Transverse colon (tissue), 4 donors: ENCODE measurements at regions of chr1 and their contacts with region 1.

Region 1: GRCh38 chr1:171644805-171645483 is 7.5 kb downstream of the MYOC start:
- DNase-seq: peak; percentile 86
- H3K4me3 ChIP-seq: no peak overlapping the region
- H3K27ac ChIP-seq: peak overlapping the region; percentile 46 to 81 (median 66)
- H3K4me1 ChIP-seq: peaks cover 5 to 16% (median 10%) of the 10 kb centered on the region in 4 donors
- H3K27me3 ChIP-seq: no peaks in the 10 kb centered on the region
- CTCF ChIP-seq: peak; percentile 68 to 75 (median 72)
- EP300 ChIP-seq: no peak
- POLR2A ChIP-seq: no peak

Region 2: GRCh38 chr1:170145770-170146676 is 1498.9 kb before region 1 on chr1 and contains the start of gene NTMT2:
- in situ Hi-C with region 1: no loop called
- intact Hi-C with region 1: loop called (anchors 5 kb)
- DNase-seq: no peak
- H3K4me3 ChIP-seq: no peak within 1 kb of the TSS
- H3K27ac ChIP-seq: no peak within 1 kb of the TSS
- H3K4me1 ChIP-seq: no peaks in the 10 kb centered on the region
- H3K27me3 ChIP-seq: no peaks in the 10 kb centered on the region
- CTCF ChIP-seq: no peak
- EP300 ChIP-seq: no peak
- POLR2A ChIP-seq: no peak
- total RNA-seq, gene NTMT2: not detected

Region 3: DNA sequence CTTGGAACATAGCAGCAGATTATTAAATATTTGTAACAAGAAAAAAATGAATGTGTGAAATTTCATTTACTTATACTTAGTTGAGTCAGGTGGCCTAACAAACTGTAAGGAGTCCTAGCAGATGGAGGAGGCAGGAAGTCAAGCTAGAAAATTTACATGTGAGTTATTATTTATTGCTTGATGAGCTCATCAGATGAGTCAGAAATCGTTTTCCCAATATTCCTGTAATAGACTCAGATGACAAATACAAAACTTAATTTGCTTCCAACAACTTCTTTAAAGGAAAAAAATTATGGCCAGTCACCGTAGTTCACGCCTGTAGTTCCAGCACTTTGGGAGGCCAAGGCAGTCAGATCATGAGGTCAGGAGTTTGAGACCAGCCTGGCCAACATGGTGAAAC is 203.7 kb before region 1 on chr1:
- in situ Hi-C with region 1: no loop called
- intact Hi-C with region 1: no loop called
- DNase-seq: no peak
- H3K4me3 ChIP-seq: no peak overlapping the region
- H3K27ac ChIP-seq: no peak overlapping the region
- H3K4me1 ChIP-seq: no peaks in the 10 kb centered on the region
- H3K27me3 ChIP-seq: no peaks in the 10 kb centered on the region
- CTCF ChIP-seq: no peak
- EP300 ChIP-seq: no peak
- POLR2A ChIP-seq: no peak

Region 4: DNA sequence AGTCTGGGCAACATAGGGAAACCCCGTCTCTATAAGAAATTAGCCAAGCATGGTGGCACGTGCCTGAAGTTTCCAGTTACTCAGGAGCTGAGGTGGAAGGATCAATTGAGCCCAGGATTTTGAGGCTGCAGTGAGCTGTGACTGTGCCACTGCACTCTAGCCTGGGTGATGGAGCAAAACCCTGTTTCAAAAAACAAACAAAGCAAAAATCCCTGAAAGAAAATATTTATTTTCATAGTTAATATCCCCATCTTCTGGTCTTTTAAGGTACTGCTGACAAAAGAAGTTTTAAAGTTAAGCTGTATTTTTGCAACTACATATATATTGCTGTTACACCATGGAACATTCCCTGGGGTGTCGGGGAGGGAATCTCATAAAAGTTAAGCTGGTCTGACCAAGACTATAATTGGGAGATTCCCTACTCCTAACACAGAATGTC is 70.9 kb after region 1 on chr1:
- in situ Hi-C with region 1: no loop called
- intact Hi-C with region 1: loop called (anchors 2 kb)
- DNase-seq: no peak
- H3K4me3 ChIP-seq: no peak overlapping the region
- H3K27ac ChIP-seq: no peak overlapping the region
- H3K4me1 ChIP-seq: peaks cover 0 to 20% (median 3%) of the 10 kb centered on the region in 4 donors
- H3K27me3 ChIP-seq: no peaks in the 10 kb centered on the region
- CTCF ChIP-seq: peak; percentile 31 to 49 (median 43)
- EP300 ChIP-seq: no peak
- POLR2A ChIP-seq: no peak

Region 5: GRCh38 chr1:171781176-171781875 is 136.4 kb after region 1 on chr1 and contains the start of gene METTL13:
- in situ Hi-C with region 1: no loop called
- intact Hi-C with region 1: loop called (anchors 10 kb)
- DNase-seq: peak; percentile 99
- H3K4me3 ChIP-seq: peak within 1 kb of the TSS; percentile 64 to 78 (median 64)
- H3K27ac ChIP-seq: peak within 1 kb of the TSS; percentile 89 to 98 (median 91)
- H3K4me1 ChIP-seq: peaks cover 9 to 40% (median 22%) of the 10 kb centered on the region in 4 donors
- H3K27me3 ChIP-seq: no peaks in the 10 kb centered on the region
- CTCF ChIP-seq: no peak
- EP300 ChIP-seq: no peak
- POLR2A ChIP-seq: peak; percentile 95
- total RNA-seq, gene METTL13: 10.5 to 80.8 (median 25.8) TPM

Region 6: GRCh38 chr1:171984850-171985485 is 340.0 kb after region 1 on chr1:
- in situ Hi-C with region 1: loop called in 3 of 4 experiments (anchors 10 to 25 kb)
- intact Hi-C with region 1: no loop called
- DNase-seq: no peak
- H3K4me3 ChIP-seq: no peak overlapping the region
- H3K27ac ChIP-seq: no peak overlapping the region
- H3K4me1 ChIP-seq: peaks cover 0 to 8% (median 0%) of the 10 kb centered on the region in 4 donors
- H3K27me3 ChIP-seq: no peaks in the 10 kb centered on the region
- CTCF ChIP-seq: peak; percentile 70 to 80 (median 76)
- EP300 ChIP-seq: no peak
- POLR2A ChIP-seq: no peak